ENCODE measurements at regions of chr3 and their contacts with region 1.

Region 1: DNA sequence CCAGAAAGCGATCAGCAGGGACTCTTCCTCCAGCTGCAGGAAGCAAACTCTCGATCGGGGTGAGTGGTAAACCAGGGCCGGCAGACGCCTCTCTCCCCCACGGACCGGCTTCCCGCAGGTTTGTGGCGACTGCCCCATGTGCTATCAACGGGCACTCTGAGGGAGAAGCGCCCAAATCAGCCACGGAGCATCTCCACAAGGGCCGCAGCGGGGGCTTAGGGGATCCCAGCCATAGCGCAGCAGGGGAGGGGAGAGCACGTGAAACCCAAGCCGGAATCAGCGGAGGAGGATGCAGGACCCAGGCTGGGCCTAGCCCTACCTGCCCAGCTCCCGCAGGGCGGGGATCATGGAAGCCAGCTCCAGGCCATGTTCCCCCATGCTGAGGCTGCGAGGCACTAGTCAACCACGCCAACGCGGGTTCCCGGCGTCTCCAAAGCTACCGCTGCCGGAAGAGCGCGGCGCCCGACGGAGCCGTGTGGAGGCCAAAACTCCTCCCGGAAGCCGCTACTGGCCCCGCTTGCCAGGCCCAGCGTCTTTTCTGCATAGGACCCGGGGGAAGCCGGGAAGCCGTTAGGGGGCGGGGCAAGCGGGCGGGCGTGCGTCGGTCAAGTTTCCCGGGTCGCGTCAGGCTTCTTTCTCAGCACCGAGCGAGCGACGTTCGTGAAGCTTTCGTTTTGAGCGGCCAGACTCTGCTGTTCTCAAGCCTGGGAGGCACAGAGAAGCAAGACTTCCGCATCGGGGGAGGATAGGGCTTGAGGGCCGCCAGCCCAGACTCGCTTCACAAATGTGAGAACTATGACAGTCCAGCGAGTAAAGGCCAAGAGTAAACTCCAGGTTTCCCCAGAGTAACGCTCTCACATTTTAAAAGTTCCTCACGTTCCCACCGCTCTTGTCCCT is at the start of gene ATR:
- DNase-seq: peak; percentile 94
- H3K4me3 ChIP-seq: peak within 1 kb of the TSS; percentile 91 to 97
- H3K27ac ChIP-seq: peak within 1 kb of the TSS; percentile 92 to 93
- H3K4me1 ChIP-seq: peaks cover 4 to 7% of the 10 kb centered on the region in 2 experiments; a peak in 3 of 4 replicates
- H3K27me3 ChIP-seq: no peaks in the 10 kb centered on the region
- CTCF ChIP-seq: no peak
- EP300 ChIP-seq: peak in 1 of 2 experiments; percentile 62; a peak in 1 of 4 replicates
- RAD21 ChIP-seq: no peak
- polyA plus RNA-seq, gene ATR: 7.3 and 13.2 TPM in 2 replicates

Region 2: GRCh38 chr3:142481196-142481595 is 97.4 kb before region 1 on chr3:
- CTCF ChIA-PET with region 1: no interaction called
- POLR2A ChIA-PET with region 1: no interaction called
- DNase-seq: no peak
- H3K4me3 ChIP-seq: no peak overlapping the region; a peak in 1 of 4 replicates
- H3K27ac ChIP-seq: no peak overlapping the region
- H3K4me1 ChIP-seq: no peaks in the 10 kb centered on the region
- H3K27me3 ChIP-seq: no peaks in the 10 kb centered on the region
- CTCF ChIP-seq: no peak
- EP300 ChIP-seq: no peak
- RAD21 ChIP-seq: no peak

Region 3: DNA sequence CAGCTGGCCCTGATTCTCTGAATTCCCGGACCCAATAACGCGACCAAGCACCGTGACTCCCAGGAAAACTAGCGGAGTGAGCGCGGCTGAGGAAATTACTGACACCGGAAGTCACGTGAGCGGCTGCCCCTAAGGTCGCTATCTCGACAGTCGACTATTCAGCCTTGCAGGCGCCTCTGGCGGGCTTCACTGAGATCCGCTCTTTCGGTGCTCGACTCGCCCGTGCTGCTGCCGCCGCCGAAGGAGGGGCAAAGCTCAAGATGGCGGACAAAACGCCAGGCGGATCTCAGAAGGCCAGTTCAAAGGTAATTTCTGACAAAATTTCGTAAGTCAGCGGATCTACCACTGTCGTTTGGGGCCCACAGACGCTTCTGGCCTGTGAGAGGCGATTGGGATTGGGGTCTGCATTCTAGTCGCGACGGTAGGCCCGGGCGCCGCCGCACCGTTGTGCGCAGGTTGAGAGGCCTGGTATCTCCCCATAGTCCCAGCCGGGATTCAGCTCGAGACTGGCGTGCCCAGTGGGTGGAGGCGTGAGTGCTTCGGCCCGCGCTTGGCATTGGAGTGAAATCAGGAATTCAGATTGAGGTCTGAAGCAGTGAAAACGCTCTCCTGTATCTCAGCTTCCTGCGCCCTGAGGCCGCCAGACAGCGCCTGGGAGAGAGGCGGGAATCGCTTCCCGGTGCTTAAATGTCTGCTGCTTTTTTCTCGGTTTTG is 423.0 kb after region 1 on chr3 and contains the start of gene U2SURP:
- CTCF ChIA-PET with region 1: interaction called, 4 read pairs
- POLR2A ChIA-PET with region 1: interaction called, 17 read pairs
- DNase-seq: peak; percentile 91
- H3K4me3 ChIP-seq: peak within 1 kb of the TSS; percentile 96 to 97
- H3K27ac ChIP-seq: peak within 1 kb of the TSS; percentile 93 to 96
- H3K4me1 ChIP-seq: peaks cover 11 to 16% of the 10 kb centered on the region in 2 experiments; a peak in 3 of 4 replicates
- H3K27me3 ChIP-seq: no peaks in the 10 kb centered on the region
- CTCF ChIP-seq: no peak
- EP300 ChIP-seq: peak in 1 of 2 experiments; percentile 62; a peak in 1 of 4 replicates
- RAD21 ChIP-seq: no peak
- polyA plus RNA-seq, gene U2SURP: 10.9 and 14.8 TPM in 2 replicates